ENCODE measurements at regions of chr18 and their contacts with region 1.

Region 1: DNA sequence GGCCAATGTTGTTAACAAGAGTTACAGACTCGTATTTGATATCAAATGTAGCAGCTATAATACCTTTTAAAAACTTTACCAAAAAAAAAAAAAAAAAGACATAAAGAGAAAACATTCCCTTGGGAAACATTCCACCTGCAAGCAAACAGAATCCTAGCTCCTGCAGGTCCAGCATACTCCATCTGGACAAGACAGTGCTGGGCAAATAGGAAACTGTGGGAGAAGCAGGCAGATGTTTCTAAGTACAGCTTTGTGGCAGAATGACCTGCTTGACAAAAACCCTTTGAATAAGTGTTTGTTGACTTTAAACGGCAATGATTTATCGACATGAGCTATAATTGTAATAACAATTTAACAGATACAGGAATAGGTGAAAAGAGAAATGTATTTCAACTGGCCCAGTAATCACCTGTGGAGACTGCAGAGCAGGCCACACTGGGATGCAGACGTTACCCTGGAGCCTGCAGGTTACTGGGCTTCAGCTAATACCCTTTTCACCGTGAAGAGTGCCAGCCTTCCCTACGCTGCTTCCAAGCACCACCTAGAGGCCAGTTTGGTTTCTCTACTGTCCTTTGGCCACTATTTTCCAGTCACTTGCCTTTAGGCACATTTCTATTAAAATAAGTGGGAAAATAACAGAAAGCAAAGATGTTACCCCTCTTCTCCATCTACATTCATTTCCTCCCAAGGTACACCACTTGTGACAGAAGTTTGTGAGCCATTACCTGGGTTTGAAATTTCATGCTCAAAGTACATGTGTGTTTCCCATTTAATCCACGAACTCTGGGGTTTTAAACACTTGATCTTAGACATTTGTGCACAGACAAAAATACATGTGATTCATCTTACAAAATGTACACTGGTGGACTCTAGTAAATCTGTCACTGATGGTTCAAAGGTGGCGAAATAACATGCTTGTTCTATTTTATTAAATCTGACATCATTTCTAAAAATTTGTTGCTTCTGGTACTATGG is 96.9 kb upstream of the ZNF397 start:
- DNase-seq: peak; percentile 27 to 56
- H3K4me3 ChIP-seq: no peak overlapping the region
- H3K27ac ChIP-seq: no peak overlapping the region
- H3K4me1 ChIP-seq: peaks cover 2 to 7% (median 4%) of the 10 kb centered on the region in 4 experiments; a peak in 4 of 7 replicates
- H3K27me3 ChIP-seq: no peaks in the 10 kb centered on the region
- CTCF ChIP-seq: peak; percentile 55 to 89 (median 86)
- EP300 ChIP-seq: no peak
- POLR2A ChIP-seq: no peak
- RAD21 ChIP-seq: peak; percentile 86 to 92

Region 2: GRCh38 chr18:34942975-34943374 is 200.9 kb before region 1 on chr18:
- CTCF ChIA-PET with region 1: no interaction called
- POLR2A ChIA-PET with region 1: no interaction called
- DNase-seq: no peak
- H3K4me3 ChIP-seq: no peak overlapping the region
- H3K27ac ChIP-seq: no peak overlapping the region
- H3K4me1 ChIP-seq: no peaks in the 10 kb centered on the region
- H3K27me3 ChIP-seq: no peaks in the 10 kb centered on the region
- CTCF ChIP-seq: peak in 1 of 3 experiments; percentile 33; a peak in 1 of 4 replicates
- EP300 ChIP-seq: no peak
- POLR2A ChIP-seq: no peak
- RAD21 ChIP-seq: peak; percentile 42 to 51

Region 3: GRCh38 chr18:35005963-35006577 is 137.8 kb before region 1 on chr18:
- CTCF ChIA-PET with region 1: interaction called, 20 read pairs
- POLR2A ChIA-PET with region 1: no interaction called
- DNase-seq: no peak
- H3K4me3 ChIP-seq: no peak overlapping the region
- H3K27ac ChIP-seq: no peak overlapping the region
- H3K4me1 ChIP-seq: peaks cover 0 to 2% (median 0%) of the 10 kb centered on the region in 4 experiments; a peak in 1 of 7 replicates
- H3K27me3 ChIP-seq: no peaks in the 10 kb centered on the region
- CTCF ChIP-seq: peak in 2 of 3 experiments; percentile 57 to 61; a peak in 3 of 4 replicates
- EP300 ChIP-seq: no peak
- POLR2A ChIP-seq: no peak
- RAD21 ChIP-seq: peak; percentile 82 to 89

Region 4: DNA sequence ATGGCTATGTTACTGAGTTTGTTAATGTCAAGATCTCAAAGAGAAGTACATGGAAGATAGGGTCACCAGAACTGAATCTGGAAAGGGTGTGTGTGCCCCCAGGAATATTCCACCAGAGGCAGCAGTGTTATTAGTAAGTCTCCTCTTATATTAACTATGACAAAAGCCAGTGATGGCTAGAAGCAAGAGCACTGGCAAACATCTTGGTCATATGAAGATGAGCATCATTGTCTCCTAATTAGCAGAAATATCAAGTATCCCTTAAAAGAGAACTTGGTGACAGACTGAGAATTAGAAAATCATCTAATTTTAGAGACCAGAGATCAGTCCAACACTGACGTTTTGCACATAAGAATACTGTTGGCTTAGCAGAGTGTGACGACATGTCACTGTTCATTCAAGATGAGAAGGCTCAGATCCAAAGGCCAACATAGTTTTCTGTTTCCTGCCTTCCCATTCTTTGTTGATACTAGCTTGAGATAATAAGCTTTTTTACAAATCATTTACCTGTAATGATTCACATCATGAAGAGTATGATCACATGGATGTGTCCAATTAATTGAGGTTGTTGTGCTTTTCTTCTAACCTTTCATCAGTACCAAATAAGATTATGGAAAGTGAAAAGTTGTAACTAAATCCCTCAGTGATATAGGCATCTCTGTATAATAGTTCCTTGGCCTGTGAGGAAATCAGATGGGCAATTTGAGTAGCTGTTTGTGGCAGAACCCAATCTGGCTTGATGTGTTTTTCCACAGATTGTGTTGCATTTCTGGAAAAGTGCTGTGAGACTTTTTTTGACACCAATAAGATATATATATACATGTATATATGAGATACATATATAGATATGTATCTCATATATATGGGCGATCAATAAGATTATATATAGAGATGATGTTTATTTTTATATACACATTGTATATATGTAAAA is 58.2 kb before region 1 on chr18:
- CTCF ChIA-PET with region 1: interaction called, 11 read pairs
- POLR2A ChIA-PET with region 1: no interaction called
- DNase-seq: no peak
- H3K4me3 ChIP-seq: no peak overlapping the region
- H3K27ac ChIP-seq: no peak overlapping the region
- H3K4me1 ChIP-seq: no peaks in the 10 kb centered on the region; a peak in 1 of 7 replicates
- H3K27me3 ChIP-seq: no peaks in the 10 kb centered on the region
- CTCF ChIP-seq: no peak
- EP300 ChIP-seq: no peak
- POLR2A ChIP-seq: no peak
- RAD21 ChIP-seq: no peak

Region 5: GRCh38 chr18:35132021-35132902 is 11.6 kb before region 1 on chr18:
- CTCF ChIA-PET with region 1: interaction called, 48 read pairs
- POLR2A ChIA-PET with region 1: no interaction called
- DNase-seq: no peak
- H3K4me3 ChIP-seq: no peak overlapping the region
- H3K27ac ChIP-seq: no peak overlapping the region
- H3K4me1 ChIP-seq: no peaks in the 10 kb centered on the region
- H3K27me3 ChIP-seq: no peaks in the 10 kb centered on the region
- CTCF ChIP-seq: no peak
- EP300 ChIP-seq: no peak
- POLR2A ChIP-seq: no peak
- RAD21 ChIP-seq: no peak

Region 6: DNA sequence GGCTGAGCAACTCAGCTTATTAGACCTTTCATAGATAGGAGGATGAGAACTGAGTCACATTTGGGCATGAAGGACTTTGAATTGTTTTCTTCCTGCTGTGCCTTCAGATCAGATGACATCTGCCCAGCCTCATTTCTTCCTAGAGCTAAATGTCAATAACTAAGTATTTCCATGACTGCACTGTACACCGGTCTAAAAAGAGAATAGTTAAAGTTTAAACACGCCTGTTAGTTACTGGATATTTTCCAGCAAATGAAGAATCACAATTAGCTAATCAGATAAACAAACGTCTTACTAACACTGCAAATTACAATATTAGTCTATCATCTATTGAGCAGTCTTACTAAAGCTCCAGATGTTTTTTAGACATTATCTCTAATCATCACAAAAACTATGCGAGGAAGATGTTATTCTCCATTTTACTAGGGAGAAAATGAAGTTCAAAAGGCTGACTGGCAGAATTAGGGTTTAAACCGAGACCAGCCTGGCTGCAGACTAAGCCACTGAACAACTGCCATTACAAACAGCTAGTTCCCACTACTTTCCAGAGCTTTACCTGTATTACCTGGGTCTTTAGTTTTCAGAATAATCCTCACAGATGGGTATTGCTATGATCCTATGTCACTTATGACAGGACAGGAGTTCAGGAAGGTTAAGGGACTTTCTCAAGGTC is 27.5 kb after region 1 on chr18:
- CTCF ChIA-PET with region 1: interaction called, 14 read pairs
- POLR2A ChIA-PET with region 1: no interaction called
- DNase-seq: no peak
- H3K4me3 ChIP-seq: no peak overlapping the region
- H3K27ac ChIP-seq: no peak overlapping the region
- H3K4me1 ChIP-seq: peaks cover 0 to 7% (median 0%) of the 10 kb centered on the region in 4 experiments; a peak in 2 of 7 replicates
- H3K27me3 ChIP-seq: no peaks in the 10 kb centered on the region
- CTCF ChIP-seq: no peak
- EP300 ChIP-seq: no peak
- POLR2A ChIP-seq: no peak
- RAD21 ChIP-seq: no peak

Region 7: DNA sequence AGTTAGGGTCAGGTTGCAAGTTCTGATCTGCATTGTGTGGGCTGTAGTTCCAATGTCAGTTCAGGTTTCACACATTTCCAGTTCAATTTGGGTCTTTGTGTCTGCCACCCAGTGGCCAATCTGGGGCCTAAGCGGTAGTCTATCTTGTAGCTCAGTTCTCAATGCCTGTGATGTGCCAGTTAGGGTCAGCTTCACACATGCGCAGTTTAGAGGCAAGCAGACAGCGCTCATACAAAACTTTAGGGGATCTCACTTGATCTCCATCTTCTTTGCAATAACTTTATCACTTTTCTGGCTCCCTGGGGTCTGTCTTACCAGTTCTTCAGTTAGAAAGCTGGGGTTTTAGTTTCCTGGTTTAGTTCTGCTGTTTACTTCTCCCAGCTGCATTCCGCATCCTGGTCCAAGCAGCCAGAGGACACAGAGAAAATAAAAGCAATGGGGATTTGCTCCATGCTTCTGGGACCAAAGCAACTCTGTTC is 211.3 kb after region 1 on chr18:
- CTCF ChIA-PET with region 1: no interaction called
- POLR2A ChIA-PET with region 1: no interaction called
- DNase-seq: peak; percentile 62 to 66
- H3K4me3 ChIP-seq: no peak overlapping the region; a peak in 1 of 8 replicates
- H3K27ac ChIP-seq: no peak overlapping the region
- H3K4me1 ChIP-seq: peaks cover 0 to 4% (median 2%) of the 10 kb centered on the region in 4 experiments; a peak in 2 of 7 replicates
- H3K27me3 ChIP-seq: no peaks in the 10 kb centered on the region
- CTCF ChIP-seq: peak; percentile 60 to 89 (median 67)
- EP300 ChIP-seq: no peak
- POLR2A ChIP-seq: no peak; a peak in 1 of 3 replicates
- RAD21 ChIP-seq: peak; percentile 59 to 73

Measured in H1 (cell line).